PC-3 (cell line): ENCODE measurements at regions of chr2 and their contacts with region 1.

Region 1: GRCh38 chr2:171811245-171811628 is 82.8 kb downstream of the SLC25A12 start:
- DNase-seq: peak; percentile 57
- ATAC-seq: peak; percentile 82
- H3K4me3 ChIP-seq: no peak overlapping the region
- H3K27ac ChIP-seq: no peak overlapping the region
- H3K4me1 ChIP-seq: no peaks in the 10 kb centered on the region
- H3K27me3 ChIP-seq: no peaks in the 10 kb centered on the region
- CTCF ChIP-seq: peak; percentile 61

Region 2: DNA sequence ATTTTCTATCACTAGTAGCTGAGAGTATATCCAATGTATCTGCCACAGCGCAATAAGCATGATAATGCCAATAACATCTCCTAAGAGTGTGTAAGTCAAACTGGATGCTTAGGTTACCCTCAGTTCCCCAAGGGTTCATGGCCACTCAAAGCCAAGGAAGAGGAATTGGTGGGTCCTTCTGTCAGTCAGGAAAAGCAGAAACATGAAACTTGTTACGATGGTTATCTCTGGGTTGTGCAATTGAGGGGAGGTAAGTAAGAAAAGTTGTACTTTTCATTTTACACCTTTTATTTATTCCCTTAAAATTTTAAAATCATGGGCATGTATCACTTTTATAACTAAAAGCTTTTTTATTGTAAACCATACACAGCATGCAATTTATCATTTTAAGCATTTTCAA is 1004.7 kb before region 1 on chr2:
- CTCF ChIA-PET with region 1: no interaction called
- POLR2A ChIA-PET with region 1: no interaction called
- intact Hi-C with region 1: no loop called
- DNase-seq: no peak
- ATAC-seq: no peak
- H3K4me3 ChIP-seq: no peak overlapping the region
- H3K27ac ChIP-seq: no peak overlapping the region
- H3K4me1 ChIP-seq: no peaks in the 10 kb centered on the region
- H3K27me3 ChIP-seq: no peaks in the 10 kb centered on the region
- CTCF ChIP-seq: no peak

Region 3: DNA sequence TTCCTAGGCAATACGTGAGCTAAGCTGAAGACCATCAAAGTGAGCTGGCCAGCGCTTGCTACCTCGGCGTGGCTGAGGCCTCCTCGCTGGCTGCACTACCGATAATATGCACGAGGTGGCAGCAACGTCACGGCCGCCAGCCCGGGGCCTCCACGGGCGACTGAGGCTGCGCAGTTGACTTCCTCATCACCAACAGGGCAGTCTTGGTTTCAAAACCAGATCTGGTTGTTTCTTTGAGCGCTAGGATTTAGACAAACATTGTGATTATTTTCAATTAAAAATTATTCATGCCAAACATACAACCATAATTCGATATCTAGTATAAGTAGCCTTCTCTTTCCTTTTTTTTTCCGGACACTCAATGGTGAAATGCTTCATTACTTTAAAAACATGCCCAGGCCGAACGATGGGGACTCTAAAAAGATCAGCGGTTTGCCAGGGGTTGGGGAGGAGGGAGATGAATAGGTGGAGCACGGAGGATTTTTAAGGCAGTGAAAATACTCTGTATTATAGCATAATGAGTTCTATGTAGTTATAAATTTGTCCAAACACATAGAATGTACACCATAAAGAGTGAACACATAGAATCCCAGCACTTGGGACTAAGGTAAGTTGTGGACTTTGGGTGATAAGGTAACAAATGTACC is 237.0 kb before region 1 on chr2:
- CTCF ChIA-PET with region 1: no interaction called
- POLR2A ChIA-PET with region 1: no interaction called
- intact Hi-C with region 1: loop called (anchors 10 kb)
- DNase-seq: peak; percentile 84
- ATAC-seq: peak; percentile 98
- H3K4me3 ChIP-seq: no peak overlapping the region
- H3K27ac ChIP-seq: no peak overlapping the region
- H3K4me1 ChIP-seq: no peaks in the 10 kb centered on the region
- H3K27me3 ChIP-seq: no peaks in the 10 kb centered on the region
- CTCF ChIP-seq: peak; percentile 96

Region 4: DNA sequence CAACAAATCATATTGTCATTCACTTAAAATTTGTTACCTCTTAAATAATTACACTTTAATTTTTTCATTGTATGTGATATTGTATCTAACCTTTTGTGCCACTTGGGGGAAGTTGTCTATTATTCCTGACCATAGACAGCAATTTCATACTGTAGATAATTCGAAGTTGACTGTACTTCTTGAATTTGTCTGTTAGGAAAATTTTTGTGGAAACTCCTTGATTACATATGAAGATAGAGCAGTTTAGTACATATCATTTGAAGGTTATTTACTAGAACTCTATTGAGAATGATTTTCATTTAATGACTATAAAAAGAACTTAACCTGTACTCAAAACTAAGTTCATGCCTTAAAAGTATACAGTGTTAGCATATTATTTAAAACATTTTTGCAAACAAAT is 118.9 kb before region 1 on chr2:
- CTCF ChIA-PET with region 1: no interaction called
- POLR2A ChIA-PET with region 1: interaction called, 13 read pairs
- intact Hi-C with region 1: no loop called
- DNase-seq: no peak
- ATAC-seq: no peak
- H3K4me3 ChIP-seq: no peak overlapping the region
- H3K27ac ChIP-seq: no peak overlapping the region
- H3K4me1 ChIP-seq: peaks cover 6% of the 10 kb centered on the region
- H3K27me3 ChIP-seq: no peaks in the 10 kb centered on the region
- CTCF ChIP-seq: no peak

Region 5: GRCh38 chr2:171723724-171724683 is 87.2 kb before region 1 on chr2:
- CTCF ChIA-PET with region 1: no interaction called
- POLR2A ChIA-PET with region 1: no interaction called
- intact Hi-C with region 1: no loop called
- DNase-seq: peak; percentile 22
- ATAC-seq: peak; percentile 62
- H3K4me3 ChIP-seq: no peak overlapping the region
- H3K27ac ChIP-seq: no peak overlapping the region
- H3K4me1 ChIP-seq: no peaks in the 10 kb centered on the region
- H3K27me3 ChIP-seq: no peaks in the 10 kb centered on the region
- CTCF ChIP-seq: 0 out of 2 replicates have a peak, but pooled peaks have one; percentile 11

Region 6: GRCh38 chr2:171922230-171923022 is 111.2 kb after region 1 on chr2 and contains the start of gene HAT1:
- CTCF ChIA-PET with region 1: no interaction called
- POLR2A ChIA-PET with region 1: no interaction called
- intact Hi-C with region 1: loop called (anchors 5 kb)
- DNase-seq: peak; percentile 98
- ATAC-seq: peak; percentile 94
- H3K4me3 ChIP-seq: peak within 1 kb of the TSS; percentile 86
- H3K27ac ChIP-seq: peak within 1 kb of the TSS; percentile 72
- H3K4me1 ChIP-seq: peaks cover 19% of the 10 kb centered on the region
- H3K27me3 ChIP-seq: no peaks in the 10 kb centered on the region
- CTCF ChIP-seq: no peak
- total RNA-seq, gene HAT1: 58.7 and 76.8 TPM in 2 replicates